ENCODE measurements at regions of chr4 and their contacts with region 1.

Region 1: GRCh38 chr4:25234390-25235370 is 847 bp downstream of the PI4K2B start:
- DNase-seq: no peak
- ATAC-seq: peak; percentile 68
- H3K4me3 ChIP-seq: peak overlapping the region; percentile 75 to 88
- H3K27ac ChIP-seq: peak overlapping the region; percentile 85
- H3K4me1 ChIP-seq: peaks cover 5% of the 10 kb centered on the region
- H3K27me3 ChIP-seq: no peaks in the 10 kb centered on the region
- CTCF ChIP-seq: peak; percentile 28; the same call in 1 of the 2 replicates

Region 2: DNA sequence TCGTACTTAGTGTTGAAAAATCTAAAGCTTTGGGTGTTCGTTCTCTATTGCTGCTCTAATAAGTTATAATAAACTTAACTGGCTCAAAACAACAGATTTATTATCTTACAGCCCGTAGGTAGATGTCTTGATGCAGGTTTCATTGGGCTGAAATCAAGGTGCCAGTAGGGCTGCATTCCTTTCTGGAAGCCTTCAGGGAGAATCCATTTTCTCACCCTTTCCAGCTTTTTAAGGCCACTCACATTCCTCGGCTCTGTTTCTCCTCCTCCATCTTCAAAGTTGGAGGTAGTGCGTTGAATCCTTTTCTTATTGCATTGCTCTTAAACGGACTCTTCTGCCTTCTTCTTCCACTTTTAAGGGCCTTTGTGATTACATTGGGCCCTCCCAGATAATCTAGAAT is 47.4 kb after region 1 on chr4:
- CTCF ChIA-PET with region 1: interaction called, 14 read pairs
- POLR2A ChIA-PET with region 1: no interaction called
- in situ Hi-C with region 1: no loop called
- intact Hi-C with region 1: no loop called
- DNase-seq: no peak
- ATAC-seq: no peak
- H3K4me3 ChIP-seq: no peak overlapping the region
- H3K27ac ChIP-seq: no peak overlapping the region
- H3K4me1 ChIP-seq: no peaks in the 10 kb centered on the region
- H3K27me3 ChIP-seq: no peaks in the 10 kb centered on the region
- CTCF ChIP-seq: no peak

Region 3: GRCh38 chr4:25376754-25377571 is 142.3 kb after region 1 on chr4 and contains the start of gene ANAPC4:
- CTCF ChIA-PET with region 1: no interaction called
- POLR2A ChIA-PET with region 1: no interaction called
- in situ Hi-C with region 1: no loop called
- intact Hi-C with region 1: no loop called
- DNase-seq: no peak
- ATAC-seq: peak; percentile 98
- H3K4me3 ChIP-seq: peak within 1 kb of the TSS; percentile 88 to 91
- H3K27ac ChIP-seq: peak within 1 kb of the TSS; percentile 83
- H3K4me1 ChIP-seq: peaks cover 4% of the 10 kb centered on the region; the same call in 1 of the 2 replicates
- H3K27me3 ChIP-seq: no peaks in the 10 kb centered on the region
- CTCF ChIP-seq: no peak
- total RNA-seq, gene ANAPC4: 22.8 TPM